Astrocyte of the cerebellum (primary cell): ENCODE measurements at regions of chr2 and their contacts with region 1.

Region 1: DNA sequence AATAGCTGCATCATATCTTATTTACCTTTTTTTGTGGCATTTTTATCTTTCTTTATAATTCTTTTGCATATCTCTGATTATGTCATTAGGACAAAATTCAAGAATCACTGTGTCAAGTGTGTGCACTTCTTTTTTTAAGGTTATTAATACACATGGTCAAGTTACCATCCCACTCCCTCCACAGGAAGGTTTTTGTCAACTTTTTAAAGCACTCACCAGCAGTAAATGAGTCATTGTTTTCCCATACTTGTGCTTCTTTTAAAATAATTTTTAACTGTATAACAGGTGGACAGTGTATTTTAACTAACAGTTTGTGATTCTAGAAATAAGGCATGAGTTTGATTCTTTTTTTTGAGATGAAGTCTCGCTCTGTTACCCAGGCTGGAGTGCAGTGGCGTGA is 45.7 kb upstream of the FAM171B start:
- DNase-seq: no peak
- H3K4me3 ChIP-seq: no peak overlapping the region
- CTCF ChIP-seq: no peak

Region 2: DNA sequence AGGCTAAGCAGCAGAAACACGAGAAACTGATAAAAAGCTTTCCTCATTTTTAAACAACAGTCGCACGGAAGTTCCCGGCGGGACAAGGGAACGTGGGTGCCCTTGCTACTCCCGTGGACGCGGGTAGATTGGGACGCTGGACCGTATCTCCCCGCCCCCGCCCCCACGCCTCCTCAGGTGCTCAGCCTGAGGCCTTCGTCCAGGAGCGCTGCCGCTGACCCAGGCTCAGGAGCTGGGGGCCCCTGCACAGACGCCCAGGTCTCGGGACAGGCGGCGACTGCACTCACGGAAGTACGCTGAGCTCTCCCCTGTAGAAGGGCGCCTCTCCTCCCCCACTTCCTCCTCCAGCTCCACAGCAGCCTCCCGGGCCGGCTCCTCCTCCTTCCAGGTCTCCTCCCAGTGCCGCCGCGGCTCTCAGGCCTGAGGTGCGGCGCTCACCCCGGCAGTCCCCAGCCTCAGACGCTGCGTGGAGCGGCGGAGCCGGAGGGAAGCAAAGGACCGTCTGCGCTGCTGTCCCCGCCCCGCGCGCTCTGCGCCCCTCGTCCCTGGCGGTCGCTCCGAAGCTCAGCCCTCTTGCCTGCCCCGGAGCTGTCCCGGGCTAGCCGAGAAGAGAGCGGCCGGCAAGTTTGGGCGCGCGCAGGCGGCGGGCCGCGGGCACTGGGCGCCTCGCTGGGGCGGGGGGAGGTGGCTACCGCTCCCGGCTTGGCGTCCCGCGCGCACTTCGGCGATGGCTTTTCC is 58.3 kb before region 1 on chr2 and contains the start of gene ITGAV:
- in situ Hi-C with region 1: loop called (anchors 5 kb)
- DNase-seq: peak; percentile 76
- H3K4me3 ChIP-seq: peak within 1 kb of the TSS; percentile 99
- CTCF ChIP-seq: peak; percentile 10